Activated T-helper 2 cell treated with anti-CD3 and anti-CD28 coated beads, Interferon-gamma antibody, Interleukin-2, Interleukin-4, amounts not matched to agents 10 μg/mL and 5 μg/mL and 100 μg/mL, durations not matched to agents 14 hours and 24 hours and 36 hours (primary cell): ENCODE measurements at regions of chr7 and their contacts with region 1.

Region 1: DNA sequence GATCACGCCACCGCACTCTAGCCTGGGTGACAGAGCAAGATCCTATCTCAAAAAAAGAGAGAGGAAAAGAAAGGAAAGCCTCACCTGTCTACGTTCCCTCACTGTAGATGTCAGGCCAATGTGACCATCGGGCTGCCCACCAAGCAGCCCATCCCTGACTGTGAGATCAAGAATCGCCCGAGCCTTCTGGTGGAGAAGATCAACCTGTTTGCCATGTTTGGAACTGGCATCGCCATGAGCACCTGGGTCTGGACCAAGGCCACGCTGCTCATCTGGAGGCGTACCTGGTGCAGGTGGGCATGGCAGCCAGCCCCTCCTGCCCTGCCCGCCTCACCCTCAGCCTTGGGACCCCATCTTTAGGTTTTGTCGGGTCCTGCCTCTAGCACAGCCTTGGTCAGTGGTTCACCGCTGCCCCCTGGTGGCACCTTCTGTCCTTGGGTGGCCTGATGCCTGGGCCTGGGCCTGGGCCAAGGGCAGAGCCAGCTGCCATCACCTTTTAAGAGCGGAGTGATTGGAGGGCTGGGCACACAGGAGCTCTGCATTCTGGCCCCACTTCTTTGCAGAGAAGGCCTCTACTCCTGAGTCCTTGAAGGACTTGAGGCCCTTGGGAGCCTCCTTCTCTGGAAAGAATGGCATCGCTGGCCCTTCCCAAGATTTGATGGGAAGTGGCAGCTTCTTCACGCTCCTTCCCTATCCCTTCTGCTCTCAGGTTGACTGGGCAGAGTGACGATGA is 14.4 kb upstream of the AHCYL2 start:
- DNase-seq: peak; percentile 40
- H3K4me3 Mint-ChIP-seq: no peak overlapping the region
- H3K27ac Mint-ChIP-seq: no peak overlapping the region
- H3K4me1 Mint-ChIP-seq: no peaks in the 10 kb centered on the region
- H3K27me3 Mint-ChIP-seq: peaks cover 10% of the 10 kb centered on the region

Region 2: GRCh38 chr7:129163875-129164544 is 46.4 kb before region 1 on chr7:
- intact Hi-C with region 1: loop called (anchors 1 kb)
- DNase-seq: no peak
- H3K4me3 Mint-ChIP-seq: no peak overlapping the region
- H3K27ac Mint-ChIP-seq: no peak overlapping the region
- H3K4me1 Mint-ChIP-seq: peaks cover 4% of the 10 kb centered on the region
- H3K27me3 Mint-ChIP-seq: peaks cover 6% of the 10 kb centered on the region